ENCODE measurements at regions of chr6 and their contacts with region 1.

Region 1: DNA sequence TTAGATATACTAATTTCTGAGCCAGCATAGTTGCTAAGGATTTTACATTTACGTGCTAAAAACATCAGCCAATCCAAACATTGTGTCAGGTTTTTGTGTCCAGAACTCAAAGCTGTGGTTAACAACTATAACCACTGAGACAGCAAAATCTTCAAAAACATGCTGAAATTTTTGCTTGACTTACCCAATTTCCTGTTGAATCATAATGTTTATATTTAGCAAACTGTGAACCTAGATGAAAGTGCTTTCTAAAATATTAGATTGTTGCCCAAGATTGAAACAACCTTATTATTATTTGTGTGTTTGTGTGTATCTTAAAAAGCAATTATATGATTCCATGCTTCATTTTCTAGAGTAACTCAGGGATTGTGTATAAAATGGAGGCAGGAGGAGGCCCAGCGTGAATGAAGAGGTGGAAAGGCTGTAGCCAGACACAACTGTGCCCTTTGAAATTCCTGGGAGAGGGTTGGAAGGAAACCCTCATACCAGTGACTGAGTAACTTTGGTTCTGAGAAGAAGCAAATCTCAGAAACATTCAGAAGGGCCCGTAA is 48.0 kb downstream of the ARMC2 start:
- DNase-seq: peak; percentile 65
- H3K4me3 ChIP-seq: no peak overlapping the region
- H3K27me3 ChIP-seq: no peaks in the 10 kb centered on the region
- CTCF ChIP-seq: no peak

Region 2: GRCh38 chr6:108771421-108771820 is 124.8 kb before region 1 on chr6:
- CTCF ChIA-PET with region 1: no interaction called
- POLR2A ChIA-PET with region 1: no interaction called
- DNase-seq: no peak
- H3K4me3 ChIP-seq: no peak overlapping the region
- H3K27me3 ChIP-seq: no peaks in the 10 kb centered on the region
- CTCF ChIP-seq: no peak

Region 3: GRCh38 chr6:108820006-108820405 is 76.2 kb before region 1 on chr6:
- CTCF ChIA-PET with region 1: no interaction called
- POLR2A ChIA-PET with region 1: no interaction called
- DNase-seq: no peak
- H3K4me3 ChIP-seq: no peak overlapping the region
- H3K27me3 ChIP-seq: no peaks in the 10 kb centered on the region
- CTCF ChIP-seq: no peak

Region 4: DNA sequence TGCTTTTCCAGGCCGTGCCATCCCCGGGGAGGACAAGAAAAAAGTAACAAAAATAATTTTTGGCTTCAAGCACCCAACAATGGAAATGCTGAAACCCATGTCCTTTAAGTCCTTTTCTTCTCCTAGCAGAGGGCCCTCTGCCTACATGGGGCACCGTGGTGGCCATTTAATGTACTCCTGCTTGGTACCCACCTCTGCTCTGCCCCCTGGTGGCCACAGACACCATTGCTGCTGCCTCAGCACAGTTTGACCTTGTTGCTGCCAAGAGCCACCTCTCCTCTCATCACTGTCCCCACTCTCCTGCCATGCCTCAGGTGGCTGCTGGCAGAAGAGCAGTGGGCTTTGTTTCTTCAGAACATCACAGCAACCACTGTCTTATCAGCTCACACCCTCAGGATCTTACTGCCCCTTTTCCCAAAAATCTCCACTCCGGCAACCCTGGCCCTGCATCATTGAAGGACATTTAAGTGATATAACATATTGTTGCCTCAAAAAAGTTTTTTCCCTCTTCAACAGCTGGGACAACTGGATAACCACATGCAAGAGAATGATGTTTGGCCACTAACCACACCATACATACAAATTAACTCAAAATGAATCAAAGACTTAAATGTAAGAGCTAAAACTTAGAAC is 60.9 kb before region 1 on chr6:
- CTCF ChIA-PET with region 1: interaction called, 16 read pairs
- POLR2A ChIA-PET with region 1: no interaction called
- DNase-seq: no peak
- H3K4me3 ChIP-seq: no peak overlapping the region
- H3K27me3 ChIP-seq: no peaks in the 10 kb centered on the region
- CTCF ChIP-seq: peak; percentile 90

Region 5: DNA sequence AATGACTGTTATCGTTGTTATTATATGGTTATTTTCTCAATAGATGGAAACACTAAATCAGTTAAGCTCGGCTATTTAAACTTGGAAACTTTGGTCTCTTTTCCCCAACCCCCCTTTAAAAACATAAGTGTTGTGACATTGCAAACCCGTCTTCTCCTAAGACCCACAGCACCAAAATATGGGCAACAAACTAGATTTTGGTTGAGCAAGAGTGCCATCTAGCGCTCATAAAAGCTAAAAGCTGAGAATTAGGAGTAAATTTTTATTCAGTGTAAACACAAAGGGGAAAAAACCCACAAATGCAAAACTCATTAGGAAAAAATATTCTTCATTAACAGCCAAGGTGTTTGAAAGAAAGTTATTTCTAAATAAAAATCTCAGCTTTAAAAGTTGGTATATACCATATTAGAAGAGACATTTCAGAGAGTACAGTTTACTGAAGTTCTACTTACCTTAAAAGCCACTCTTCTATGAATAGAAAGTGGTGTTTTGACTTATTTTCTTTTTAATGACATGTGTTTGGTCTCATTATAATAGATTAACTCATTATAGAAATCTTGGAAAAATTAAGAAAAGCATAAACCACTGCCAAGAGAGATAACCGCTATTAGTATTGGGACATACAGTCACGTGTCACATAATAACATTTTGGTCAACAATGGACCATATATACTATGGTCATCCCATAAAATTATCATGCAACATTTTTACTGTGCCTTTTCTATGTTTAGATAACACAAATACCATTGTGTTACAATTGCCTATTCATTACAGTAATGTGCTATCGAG is 177.4 kb after region 1 on chr6:
- CTCF ChIA-PET with region 1: interaction called, 31 read pairs
- POLR2A ChIA-PET with region 1: no interaction called
- DNase-seq: no peak
- H3K4me3 ChIP-seq: no peak overlapping the region
- H3K27me3 ChIP-seq: no peaks in the 10 kb centered on the region
- CTCF ChIP-seq: peak; percentile 62